ENCODE measurements at regions of chr17 and their contacts with region 1.

Region 1: GRCh38 chr17:40098846-40099618 is 1.4 kb downstream of the NR1D1 start:
- DNase-seq: peak; percentile 98
- H3K4me3 Mint-ChIP-seq: peak overlapping the region; percentile 89
- H3K27ac Mint-ChIP-seq: peak overlapping the region; percentile 95
- H3K4me1 Mint-ChIP-seq: peaks cover 85% of the 10 kb centered on the region
- H3K27me3 Mint-ChIP-seq: no peaks in the 10 kb centered on the region

Region 2: GRCh38 chr17:39636927-39637736 is 461.9 kb before region 1 on chr17 and contains the start of gene STARD3:
- CTCF ChIA-PET with region 1: no interaction called
- intact Hi-C with region 1: loop called (anchors 10 kb)
- DNase-seq: peak; percentile 94
- H3K4me3 Mint-ChIP-seq: peak within 1 kb of the TSS; percentile 92
- H3K27ac Mint-ChIP-seq: peak within 1 kb of the TSS; percentile 93
- H3K4me1 Mint-ChIP-seq: peaks cover 49% of the 10 kb centered on the region
- H3K27me3 Mint-ChIP-seq: no peaks in the 10 kb centered on the region
- total RNA-seq, gene STARD3: 56.1 to 56.8 TPM

Region 3: GRCh38 chr17:39927101-39927928 is 171.7 kb before region 1 on chr17 and contains the starts of genes LRRC3C and ORMDL3:
- CTCF ChIA-PET with region 1: no interaction called
- intact Hi-C with region 1: loop called (anchors 2 kb)
- DNase-seq: peak; percentile 94
- H3K4me3 Mint-ChIP-seq: peak within 1 kb of the TSS; percentile 98
- H3K27ac Mint-ChIP-seq: peak within 1 kb of the TSS; percentile 94
- H3K4me1 Mint-ChIP-seq: peaks cover 56% of the 10 kb centered on the region
- H3K27me3 Mint-ChIP-seq: no peaks in the 10 kb centered on the region
- total RNA-seq, gene LRRC3C: not detected
- total RNA-seq, gene ORMDL3: 51.8 to 52.1 TPM

Region 4: GRCh38 chr17:40075201-40075941 is 23.7 kb before region 1 on chr17:
- CTCF ChIA-PET with region 1: interaction called, 20 read pairs
- intact Hi-C with region 1: no loop called
- DNase-seq: peak; percentile 80
- H3K4me3 Mint-ChIP-seq: no peak overlapping the region
- H3K27ac Mint-ChIP-seq: no peak overlapping the region
- H3K4me1 Mint-ChIP-seq: peaks cover 36% of the 10 kb centered on the region
- H3K27me3 Mint-ChIP-seq: no peaks in the 10 kb centered on the region

Region 5: GRCh38 chr17:40287494-40288369 is 188.7 kb after region 1 on chr17 and contains the start of gene CDC6:
- CTCF ChIA-PET with region 1: interaction called, 3 read pairs
- intact Hi-C with region 1: loop called (anchors 1 kb)
- DNase-seq: peak; percentile 100
- H3K4me3 Mint-ChIP-seq: peak within 1 kb of the TSS; percentile 99
- H3K27ac Mint-ChIP-seq: peak within 1 kb of the TSS; percentile 94
- H3K4me1 Mint-ChIP-seq: peaks cover 47% of the 10 kb centered on the region
- H3K27me3 Mint-ChIP-seq: no peaks in the 10 kb centered on the region
- total RNA-seq, gene CDC6: 86.5 to 90.4 TPM

Region 6: GRCh38 chr17:40598663-40599467 is 499.8 kb after region 1 on chr17:
- CTCF ChIA-PET with region 1: no interaction called
- intact Hi-C with region 1: loop called (anchors 10 kb)
- DNase-seq: peak; percentile 90
- H3K4me3 Mint-ChIP-seq: peak overlapping the region; percentile 67
- H3K27ac Mint-ChIP-seq: peak overlapping the region; percentile 98
- H3K4me1 Mint-ChIP-seq: peaks cover 95% of the 10 kb centered on the region
- H3K27me3 Mint-ChIP-seq: no peaks in the 10 kb centered on the region